Lower leg skin (tissue), 4 donors: ENCODE measurements at regions of chr20 and their contacts with region 1.

Region 1: DNA sequence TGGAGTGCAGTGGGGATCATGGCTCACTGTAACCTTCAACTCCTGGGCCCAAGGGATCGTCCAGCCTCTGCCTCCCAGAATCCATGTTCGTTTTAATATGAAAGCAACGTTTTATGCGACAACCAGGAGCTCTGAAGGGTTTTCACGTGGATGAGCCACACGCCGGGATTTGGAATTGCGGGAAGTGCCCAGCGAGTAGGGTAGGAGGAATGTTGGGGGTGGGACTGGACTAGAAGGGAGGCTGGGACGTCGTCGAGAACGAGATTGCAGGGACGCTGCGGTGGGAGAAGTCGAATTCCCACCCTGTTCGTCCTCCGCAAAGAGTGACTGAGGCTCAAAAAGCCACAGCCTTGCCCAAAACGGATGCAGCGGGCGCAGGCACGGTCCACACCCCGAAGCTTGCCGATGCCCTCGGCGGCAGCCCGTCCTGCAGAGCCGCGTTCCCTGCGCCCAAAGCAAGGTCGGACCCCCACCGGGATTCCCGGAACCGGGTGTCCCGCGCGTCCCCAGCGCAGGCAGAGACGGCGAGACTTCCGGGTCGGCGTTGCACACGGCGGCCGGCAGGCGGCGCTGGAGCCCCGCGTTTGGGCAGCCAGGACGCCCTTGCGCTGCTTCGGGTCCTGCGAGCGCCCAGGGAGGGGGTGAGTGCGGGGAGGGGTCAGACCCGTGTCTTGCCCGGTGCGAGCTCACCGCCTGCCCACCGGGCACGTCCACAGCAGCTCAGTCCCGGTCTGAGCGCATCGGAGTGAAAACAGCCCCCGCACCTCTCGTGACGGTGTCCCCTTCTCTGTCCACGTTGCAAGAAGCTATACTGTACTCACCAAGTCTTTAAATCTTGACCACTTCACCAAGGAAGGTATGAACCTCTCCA is 87.8 kb downstream of the DHX35 start:
- DNase-seq: peak; percentile 56 to 94
- H3K4me3 ChIP-seq: peak overlapping the region; percentile 28
- CTCF ChIP-seq: peak in 1 of 3 donors; percentile 85
- POLR2A ChIP-seq: no peak

Region 2: DNA sequence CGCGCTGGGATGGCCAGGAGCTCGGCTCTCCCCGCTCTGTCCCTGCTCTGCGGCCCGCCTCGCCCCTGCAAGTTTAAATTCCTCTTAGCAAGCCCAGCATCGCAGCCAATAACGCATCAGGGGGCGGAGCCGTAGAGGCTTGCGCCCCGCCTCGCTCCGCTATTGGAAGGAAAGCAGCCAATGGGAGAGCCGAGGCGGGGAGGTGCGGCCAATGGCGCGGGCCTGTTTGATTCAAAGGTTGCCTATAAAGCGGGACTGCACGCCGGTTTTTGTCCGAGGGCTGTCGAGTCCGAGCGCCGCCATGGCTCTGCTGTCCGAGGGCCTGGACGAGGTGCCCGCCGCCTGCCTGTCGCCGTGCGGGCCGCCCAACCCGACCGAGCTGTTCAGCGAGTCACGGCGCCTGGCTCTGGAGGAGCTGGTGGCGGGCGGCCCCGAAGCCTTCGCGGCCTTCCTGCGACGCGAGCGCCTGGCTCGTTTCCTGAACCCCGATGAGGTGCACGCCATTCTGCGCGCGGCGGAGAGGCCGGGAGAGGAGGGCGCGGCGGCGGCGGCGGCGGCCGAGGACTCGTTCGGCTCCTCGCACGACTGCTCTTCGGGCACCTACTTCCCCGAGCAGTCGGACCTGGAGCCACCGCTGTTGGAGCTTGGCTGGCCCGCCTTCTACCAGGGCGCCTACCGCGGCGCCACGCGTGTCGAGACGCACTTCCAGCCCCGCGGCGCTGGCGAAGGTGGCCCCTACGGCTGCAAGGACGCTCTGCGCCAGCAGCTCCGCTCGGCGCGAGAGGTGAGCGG is 123.6 kb before region 1 on chr20 and contains the start of gene FAM83D:
- intact Hi-C with region 1: loop called (anchors 5 kb)
- DNase-seq: peak; percentile 87 to 97
- H3K4me3 ChIP-seq: peak within 1 kb of the TSS; percentile 26
- CTCF ChIP-seq: peak in 1 of 3 donors; percentile 4
- POLR2A ChIP-seq: no peak
- total RNA-seq, gene FAM83D: 8.7 to 17.4 (median 14.0) TPM

Region 3: GRCh38 chr20:39004508-39004907 is 45.4 kb before region 1 on chr20:
- intact Hi-C with region 1: no loop called
- DNase-seq: peak in 1 of 2 donors; percentile 39
- H3K4me3 ChIP-seq: no peak overlapping the region
- CTCF ChIP-seq: no peak
- POLR2A ChIP-seq: no peak

Region 4: GRCh38 chr20:40962730-40963504 is 1913.0 kb after region 1 on chr20:
- intact Hi-C with region 1: loop called (anchors 10 kb)
- DNase-seq: peak; percentile 53 to 95
- H3K4me3 ChIP-seq: no peak overlapping the region
- CTCF ChIP-seq: peak in 2 of 3 donors; percentile 59 to 75
- POLR2A ChIP-seq: no peak